BJ (cell line): ENCODE measurements at regions of chr5 and their contacts with region 1.

Region 1: DNA sequence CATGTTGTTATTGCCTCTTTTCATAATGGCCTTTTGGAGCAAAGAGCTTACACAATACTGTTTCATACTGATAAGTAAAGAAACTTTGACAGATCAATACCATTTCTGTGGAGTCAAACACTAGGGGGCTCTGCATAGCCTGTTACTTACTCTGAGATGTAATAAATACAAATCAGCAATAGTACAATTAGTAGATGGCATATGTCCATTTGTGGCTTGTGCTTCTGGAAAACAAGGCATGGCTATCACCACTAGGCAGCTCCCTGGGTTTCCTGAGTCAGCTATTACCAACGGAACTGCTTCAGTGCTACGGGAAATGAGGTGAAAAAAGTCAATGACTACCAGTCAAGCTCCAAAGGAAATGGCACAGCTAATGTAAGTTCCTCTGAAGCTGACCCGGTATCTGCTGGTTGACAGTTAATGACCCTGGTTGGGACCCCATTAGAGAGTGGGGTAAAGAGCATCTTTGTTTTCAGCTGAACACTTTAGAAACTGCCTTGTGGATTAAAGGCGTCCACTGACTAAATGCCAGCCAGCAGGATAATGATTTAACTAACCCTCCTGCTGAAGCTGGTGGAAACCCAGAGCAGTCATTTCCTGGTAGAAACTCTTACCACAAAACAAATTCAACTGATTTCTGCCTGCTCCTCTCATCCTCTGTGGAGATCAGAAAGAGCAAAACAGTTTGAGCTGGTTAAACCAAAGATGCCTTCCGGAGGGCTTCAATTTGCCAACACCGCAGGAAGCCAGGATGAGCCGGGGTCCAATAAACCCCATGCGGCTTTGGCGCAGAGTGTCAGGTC is 69.0 kb upstream of the FAM169A start:
- DNase-seq: peak; percentile 53
- H3K4me3 ChIP-seq: no peak overlapping the region
- H3K27me3 ChIP-seq: no peaks in the 10 kb centered on the region
- CTCF ChIP-seq: peak; percentile 54

Region 2: GRCh38 chr5:74516211-74516636 is 418.9 kb before region 1 on chr5:
- CTCF ChIA-PET with region 1: no interaction called
- POLR2A ChIA-PET with region 1: interaction called, 15 read pairs
- DNase-seq: no peak
- H3K4me3 ChIP-seq: no peak overlapping the region
- H3K27me3 ChIP-seq: no peaks in the 10 kb centered on the region
- CTCF ChIP-seq: no peak

Region 3: DNA sequence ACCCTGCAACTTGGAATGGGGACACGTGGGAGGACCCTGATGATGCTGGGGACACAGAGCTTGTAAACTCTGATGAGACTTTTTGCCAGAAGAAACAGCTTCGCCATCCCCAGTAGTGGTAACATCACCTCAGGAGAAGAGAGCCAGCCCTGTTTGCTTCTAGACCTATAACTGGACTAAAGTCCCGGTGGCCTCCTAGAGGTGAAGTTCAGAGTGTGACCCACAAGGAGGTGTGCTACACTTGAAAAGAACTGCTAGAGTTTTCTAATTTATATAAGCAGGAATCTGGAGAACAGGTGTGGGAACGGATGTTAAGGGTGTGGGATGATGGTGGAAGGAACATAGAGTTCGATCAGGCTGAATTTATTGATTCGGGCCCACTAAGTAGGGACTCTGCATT is 148.3 kb before region 1 on chr5:
- CTCF ChIA-PET with region 1: no interaction called
- POLR2A ChIA-PET with region 1: no interaction called
- DNase-seq: no peak
- H3K4me3 ChIP-seq: no peak overlapping the region
- H3K27me3 ChIP-seq: no peaks in the 10 kb centered on the region
- CTCF ChIP-seq: no peak

Region 4: DNA sequence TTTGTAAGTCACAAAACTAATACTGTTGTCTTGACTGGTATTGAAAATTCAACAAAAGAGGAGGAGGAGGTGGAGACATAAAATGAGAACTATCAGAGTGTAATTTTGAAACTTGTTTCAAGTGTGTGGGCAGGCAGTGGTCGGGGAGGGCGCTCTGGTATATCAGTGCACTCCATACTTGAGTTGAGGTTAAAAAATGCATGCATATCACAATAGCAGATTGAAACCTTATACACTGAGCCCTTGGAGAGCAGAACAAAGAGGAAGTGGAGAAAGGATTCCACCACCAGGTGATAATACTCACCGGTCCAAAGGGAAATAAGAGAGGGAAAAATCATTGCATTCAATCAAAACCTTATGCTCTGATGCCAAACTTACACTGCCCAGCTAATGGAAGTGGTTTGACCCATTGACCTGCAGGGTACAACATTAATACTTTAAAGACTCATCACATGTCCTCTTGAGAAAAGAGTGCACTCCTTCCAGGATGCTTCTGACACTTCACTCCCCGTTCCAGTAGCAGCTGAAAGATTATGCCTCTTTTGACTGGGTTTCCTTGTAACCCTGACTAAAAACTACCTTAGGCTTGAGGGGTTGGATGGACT is 10.5 kb after region 1 on chr5:
- CTCF ChIA-PET with region 1: interaction called, 16 read pairs
- POLR2A ChIA-PET with region 1: no interaction called
- DNase-seq: no peak
- H3K4me3 ChIP-seq: no peak overlapping the region
- H3K27me3 ChIP-seq: no peaks in the 10 kb centered on the region
- CTCF ChIP-seq: no peak

Region 5: GRCh38 chr5:74973694-74974093 is 38.5 kb after region 1 on chr5:
- CTCF ChIA-PET with region 1: no interaction called
- POLR2A ChIA-PET with region 1: no interaction called
- DNase-seq: no peak
- H3K4me3 ChIP-seq: no peak overlapping the region
- H3K27me3 ChIP-seq: no peaks in the 10 kb centered on the region
- CTCF ChIP-seq: no peak